RWPE1 (cell line): ENCODE measurements at regions of chr14 and their contacts with region 1.

Region 1: GRCh38 chr14:77316872-77317301 is 3.8 kb downstream of the POMT2 start:
- DNase-seq: no peak
- H3K27ac ChIP-seq: peak overlapping the region; percentile 64
- CTCF ChIP-seq: no peak

Region 2: DNA sequence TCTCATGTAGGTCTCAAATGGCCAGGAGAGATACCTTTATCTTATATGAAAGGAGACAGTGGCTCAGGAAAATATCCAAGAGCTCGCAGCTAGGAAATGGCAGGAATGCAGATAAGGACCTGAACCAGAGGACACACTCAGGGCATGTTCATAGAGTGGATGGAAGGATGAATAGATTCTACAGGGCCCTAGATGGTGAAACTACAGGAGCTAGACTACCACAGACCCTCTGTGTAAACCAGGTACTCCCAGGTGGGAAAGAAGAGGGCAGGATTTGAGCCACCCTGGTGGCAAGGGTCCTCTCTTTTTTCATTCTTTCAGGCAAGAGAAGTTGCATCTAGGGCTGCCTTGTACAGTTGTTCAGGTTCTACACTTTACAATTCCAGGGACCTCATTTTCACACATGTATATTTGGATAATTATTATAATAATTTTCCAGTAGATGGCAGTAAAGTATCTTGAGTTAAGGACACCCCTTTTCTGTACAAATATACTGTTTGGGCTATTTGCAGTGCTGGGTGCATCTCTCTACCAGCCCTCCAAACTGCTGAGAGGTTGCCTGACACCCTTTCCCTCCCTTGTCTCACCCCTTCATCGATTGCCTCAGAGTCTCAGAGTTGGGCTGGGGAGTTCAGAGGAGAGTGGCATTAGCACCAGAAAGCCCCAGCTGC is 164.8 kb before region 1 on chr14:
- CTCF ChIA-PET with region 1: interaction called, 41 read pairs
- POLR2A ChIA-PET with region 1: no interaction called
- DNase-seq: peak; percentile 57
- H3K27ac ChIP-seq: no peak overlapping the region
- CTCF ChIP-seq: 0 out of 2 replicates have a peak, but pooled peaks have one; percentile 8

Region 3: DNA sequence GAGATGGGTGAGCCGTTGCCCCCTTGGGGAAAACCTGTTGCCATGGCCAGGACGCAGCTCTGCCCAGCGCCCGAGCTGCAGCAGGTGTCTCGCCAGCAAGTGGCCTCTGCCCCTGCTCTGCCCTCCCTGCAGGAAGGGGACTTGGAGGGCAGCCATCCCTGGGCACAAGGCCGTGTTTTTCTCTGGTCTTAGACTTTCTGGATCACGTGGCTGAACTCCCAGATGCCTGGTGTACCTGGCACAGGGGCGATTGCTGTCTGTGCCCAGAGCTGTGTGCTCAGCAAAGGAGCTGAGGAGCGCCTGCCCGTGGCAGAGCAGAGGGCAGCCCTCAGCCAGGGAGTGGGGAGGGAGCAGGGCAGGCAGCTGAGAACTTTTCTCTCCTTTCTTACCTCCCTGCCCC is 97.3 kb before region 1 on chr14:
- CTCF ChIA-PET with region 1: no interaction called
- POLR2A ChIA-PET with region 1: no interaction called
- DNase-seq: no peak
- H3K27ac ChIP-seq: no peak overlapping the region
- CTCF ChIP-seq: no peak

Region 4: GRCh38 chr14:77301103-77301502 is 15.8 kb before region 1 on chr14:
- CTCF ChIA-PET with region 1: interaction called, 49 read pairs
- POLR2A ChIA-PET with region 1: interaction called, 3 read pairs
- DNase-seq: peak; percentile 27
- H3K27ac ChIP-seq: no peak overlapping the region
- CTCF ChIP-seq: peak; percentile 45